ENCODE measurements at regions of chr12 and their contacts with region 1.

Region 1: DNA sequence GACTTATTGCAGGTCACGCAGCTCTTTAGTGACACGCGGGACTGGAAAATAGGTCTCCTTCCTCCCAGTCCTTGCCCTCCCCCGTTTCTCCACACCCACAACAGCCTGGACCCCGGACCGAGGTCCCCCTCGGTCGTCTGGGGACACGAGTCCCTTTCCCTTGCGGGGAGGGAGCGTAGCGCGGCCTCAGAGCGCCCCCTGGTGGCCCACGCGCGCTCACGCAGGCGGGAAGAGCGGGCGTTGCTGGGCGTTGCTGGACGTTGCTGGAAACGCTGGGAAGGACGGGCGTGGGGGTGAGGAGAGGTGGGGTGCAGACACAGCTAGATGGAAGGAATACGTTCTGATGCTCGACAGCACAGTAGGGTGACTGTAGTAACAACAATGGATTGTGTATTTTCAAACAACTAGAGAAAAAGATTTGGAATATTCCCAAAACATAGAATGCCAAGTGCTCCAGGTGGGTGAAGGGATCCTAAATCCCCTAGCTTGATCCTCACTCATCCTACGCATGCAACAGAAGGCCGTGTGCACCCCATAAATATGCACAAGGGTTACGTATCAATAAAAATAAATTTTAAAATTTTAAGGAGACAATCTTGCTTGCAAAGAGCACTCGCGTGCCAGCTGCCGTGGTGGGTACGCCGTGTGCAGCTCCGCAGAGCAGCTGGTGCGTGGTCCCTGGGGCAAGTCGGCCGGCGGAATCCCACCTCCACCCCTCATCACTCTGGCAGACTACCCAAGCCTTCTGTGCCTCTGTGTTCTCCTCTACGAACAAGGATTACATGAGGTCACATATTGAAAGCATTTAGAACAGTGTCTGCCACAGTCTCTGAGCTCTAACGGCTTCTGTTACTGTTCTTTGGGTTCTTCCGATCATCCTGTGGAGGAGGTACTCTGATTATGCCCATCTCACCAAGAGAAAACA is 87.4 kb downstream of the B4GALNT3 start:
- DNase-seq: no peak
- H3K4me3 ChIP-seq: peak overlapping the region; percentile 11; the same call in 1 of the 2 replicates
- H3K27me3 ChIP-seq: peaks cover 18% of the 10 kb centered on the region
- CTCF ChIP-seq: peak; percentile 99

Region 2: DNA sequence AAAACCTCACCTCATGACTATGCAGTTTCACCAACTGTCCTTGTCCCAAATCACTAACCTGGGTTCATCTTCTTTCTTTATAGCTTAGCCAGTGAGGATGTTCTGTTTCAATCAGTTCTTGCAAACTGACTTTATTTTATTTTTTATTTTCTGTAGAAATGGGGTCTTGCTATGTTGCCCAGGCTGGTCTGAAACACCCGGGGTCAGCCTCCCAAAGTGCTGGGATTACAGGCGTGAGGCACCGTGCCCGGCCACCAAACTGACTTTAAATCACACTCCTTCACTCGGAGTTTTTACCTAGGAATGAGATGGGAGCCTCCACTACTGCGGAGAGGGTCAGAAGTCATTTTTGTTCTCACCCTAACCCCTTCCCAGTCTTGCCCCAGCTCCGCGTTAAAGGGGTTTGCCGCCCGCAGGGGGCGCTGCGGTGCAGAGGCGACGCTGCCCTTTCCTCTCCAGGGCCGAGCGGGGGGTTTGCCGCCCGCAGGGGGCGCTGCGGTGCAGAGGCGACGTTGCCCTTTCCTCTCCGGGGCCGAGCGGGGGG is 94.4 kb before region 1 on chr12:
- CTCF ChIA-PET with region 1: interaction called, 136 read pairs
- POLR2A ChIA-PET with region 1: no interaction called
- DNase-seq: no peak
- H3K4me3 ChIP-seq: no peak overlapping the region
- H3K27me3 ChIP-seq: peaks cover 10% of the 10 kb centered on the region
- CTCF ChIP-seq: peak; percentile 30; the same call in 1 of the 2 replicates

Region 3: DNA sequence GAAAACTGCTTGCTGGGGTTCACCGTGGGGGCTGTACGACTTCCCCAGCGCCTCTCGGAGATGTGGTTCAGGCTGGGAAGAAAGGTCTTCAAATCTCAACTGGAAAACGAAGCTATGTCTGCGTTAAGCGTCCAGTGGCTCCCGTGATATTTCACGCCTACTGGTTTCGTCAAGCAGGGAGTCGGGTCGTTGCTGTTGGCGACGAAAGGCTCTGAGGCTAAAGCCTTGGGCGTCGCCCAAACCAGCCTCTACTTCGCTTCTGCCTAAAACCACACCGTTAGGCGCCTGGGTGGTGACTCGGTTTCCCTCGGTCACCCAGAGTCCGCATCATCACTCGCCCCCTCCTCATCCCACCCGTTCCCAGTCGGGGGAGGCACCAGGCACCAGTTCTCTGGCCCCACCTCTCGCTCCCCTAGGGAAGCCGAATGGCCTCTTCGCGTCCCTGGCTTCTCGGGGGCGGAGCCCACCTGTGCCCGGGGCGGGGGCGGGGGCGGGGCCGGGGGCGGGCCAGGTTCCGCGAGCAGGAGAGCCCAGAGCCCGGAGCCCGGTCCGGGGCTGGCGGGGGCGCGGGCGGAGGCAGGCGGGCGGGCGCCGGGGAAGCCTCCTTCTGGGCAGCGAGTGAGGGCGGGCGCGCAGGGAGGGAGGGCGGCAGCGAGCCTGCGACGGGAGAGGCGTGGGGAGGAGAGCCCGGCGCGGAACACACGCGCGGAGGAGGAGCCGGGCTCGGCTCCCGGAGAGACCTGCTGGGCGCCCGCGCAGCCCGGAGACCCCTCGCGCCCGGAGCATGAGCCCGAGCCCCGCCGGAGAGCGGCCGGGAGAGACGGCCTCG is 87.5 kb before region 1 on chr12 and contains the start of gene B4GALNT3:
- CTCF ChIA-PET with region 1: interaction called, 61 read pairs
- POLR2A ChIA-PET with region 1: no interaction called
- DNase-seq: no peak
- H3K4me3 ChIP-seq: peak within 1 kb of the TSS; percentile 38
- H3K27me3 ChIP-seq: peaks cover 38% of the 10 kb centered on the region
- CTCF ChIP-seq: no peak
- polyA plus RNA-seq, gene B4GALNT3: 0.05 TPM in 1 of 2 replicates, not detected in the other

Region 4: DNA sequence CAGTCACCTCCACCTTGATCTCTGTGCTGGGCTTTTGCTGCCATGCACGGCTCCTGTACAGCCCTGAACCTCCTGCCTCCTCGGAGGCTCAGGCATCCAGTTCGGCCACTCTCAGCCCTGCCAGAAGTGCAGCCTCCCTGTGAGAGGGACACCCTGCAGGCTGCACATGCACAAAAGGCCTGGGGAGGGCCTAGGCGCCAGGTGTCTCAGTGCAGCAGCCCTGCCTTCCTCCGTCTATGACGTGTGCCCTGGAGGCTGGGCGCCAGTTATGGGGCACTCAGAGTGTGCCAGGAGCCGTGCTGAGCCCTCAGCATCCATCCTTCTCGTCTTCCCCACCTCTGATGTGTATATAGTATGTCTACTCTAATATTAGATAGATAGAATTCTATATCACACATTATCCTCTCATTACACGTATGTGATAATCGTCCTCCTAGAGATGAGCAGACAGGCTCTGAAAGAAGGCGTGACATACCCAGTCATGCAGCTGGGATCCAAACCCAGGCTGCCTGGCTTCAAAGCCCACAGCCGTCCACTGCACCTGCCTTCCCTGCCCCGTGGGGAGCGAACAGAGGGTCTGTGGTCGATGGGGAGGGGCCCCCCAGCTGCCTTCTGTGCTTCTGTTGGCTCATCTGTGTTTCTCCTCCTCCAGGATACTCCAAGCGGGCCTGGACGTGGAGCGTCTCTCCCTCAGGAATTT is 13.7 kb after region 1 on chr12:
- CTCF ChIA-PET with region 1: interaction called, 36 read pairs
- POLR2A ChIA-PET with region 1: no interaction called
- DNase-seq: no peak
- H3K4me3 ChIP-seq: no peak overlapping the region
- H3K27me3 ChIP-seq: peaks cover 17% of the 10 kb centered on the region
- CTCF ChIP-seq: no peak